ENCODE measurements at regions of chr6 and their contacts with region 1.

Region 1: DNA sequence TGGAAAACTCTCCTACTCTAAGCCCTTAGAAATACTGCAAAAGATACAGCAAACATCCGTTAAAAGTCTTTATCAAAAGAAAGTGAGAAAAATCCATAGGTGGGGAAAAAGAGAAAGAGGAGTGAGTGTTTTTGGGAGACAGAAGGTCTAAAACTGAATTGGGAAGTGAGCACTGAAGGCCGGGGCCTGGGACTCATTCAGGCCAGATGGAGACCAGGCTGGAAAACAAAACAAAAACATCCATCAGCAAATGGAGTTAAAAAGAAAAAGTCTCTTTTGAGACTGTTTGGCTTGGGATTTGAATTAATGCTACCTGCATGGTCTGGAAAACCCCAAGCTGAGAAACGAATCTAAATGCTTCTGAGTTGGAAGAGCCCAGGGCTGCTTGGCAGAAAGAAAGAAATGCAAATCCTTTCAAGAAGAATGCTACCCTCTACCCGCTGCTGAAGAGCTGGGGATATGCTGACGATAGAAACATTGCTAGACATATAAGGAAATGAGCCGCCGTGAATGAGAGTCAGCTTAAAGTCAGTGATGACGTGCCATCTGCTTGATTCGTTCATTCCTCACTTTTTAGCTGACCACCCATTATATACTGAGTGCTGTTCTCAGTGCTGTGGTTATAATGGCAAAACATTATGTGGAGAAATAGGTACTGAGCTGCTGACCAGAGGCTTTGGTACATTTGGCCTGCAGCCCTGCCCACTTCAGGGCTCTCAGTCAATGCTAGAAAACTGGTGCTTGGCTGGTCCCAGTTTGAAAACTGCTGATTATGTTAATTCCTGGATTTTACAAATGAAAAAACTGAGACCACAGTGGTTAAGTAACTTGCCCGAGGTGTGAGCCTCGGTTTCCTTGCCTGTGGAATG is 28.0 kb upstream of the TULP4 start:
- DNase-seq: peak in 2 of 10 donors; percentile 17 to 26
- H3K4me3 ChIP-seq: peak overlapping the region in 23 of 59 donors; percentile 1 to 37 (median 17)
- H3K27ac ChIP-seq: peak overlapping the region; percentile 47 to 94 (median 89)
- H3K27me3 ChIP-seq: no peaks in the 10 kb centered on the region
- CTCF ChIP-seq: no peak

Region 2: GRCh38 chr6:158086504-158087223 is 197.6 kb before region 1 on chr6:
- intact Hi-C with region 1: no loop called
- DNase-seq: peak in 2 of 10 donors; percentile 48 to 62
- H3K4me3 ChIP-seq: peak overlapping the region in 31 of 59 donors; percentile 0 to 46 (median 25)
- H3K27ac ChIP-seq: peak overlapping the region in 50 of 59 donors; percentile 16 to 83 (median 70)
- H3K27me3 ChIP-seq: no peaks in the 10 kb centered on the region
- CTCF ChIP-seq: no peak

Region 3: DNA sequence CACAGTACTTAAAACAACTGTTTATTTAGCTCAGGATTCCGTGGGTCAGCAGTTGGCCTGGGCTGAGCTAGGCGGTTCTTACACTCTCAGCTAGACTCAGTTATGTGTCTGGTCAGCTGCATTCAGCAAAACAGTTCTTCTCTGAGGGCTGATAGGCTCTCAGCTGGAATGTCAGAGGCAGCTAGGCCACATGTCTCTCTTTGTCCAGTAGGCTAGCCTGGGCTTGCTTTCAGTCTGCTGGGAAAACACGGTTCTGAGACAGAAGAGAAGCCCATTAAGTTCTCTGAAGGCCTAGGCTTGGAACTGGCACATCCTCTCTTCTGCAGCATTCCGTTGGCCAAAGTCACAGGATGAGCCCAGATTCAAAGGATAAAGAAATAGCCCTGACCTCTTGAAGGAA is 93.6 kb after region 1 on chr6:
- intact Hi-C with region 1: loop called in 1 of 2 experiments (anchors 10 kb)
- DNase-seq: peak in 2 of 10 donors; percentile 60
- H3K4me3 ChIP-seq: no peak overlapping the region
- H3K27ac ChIP-seq: peak overlapping the region in 56 of 59 donors; percentile 12 to 88 (median 74)
- H3K27me3 ChIP-seq: no peaks in the 10 kb centered on the region
- CTCF ChIP-seq: peak in 2 of 56 donors; percentile 8 to 27

Region 4: GRCh38 chr6:158408552-158409130 is 124.4 kb after region 1 on chr6:
- intact Hi-C with region 1: loop called (anchors 5 to 10 kb)
- DNase-seq: peak in 9 of 10 donors; percentile 47 to 74 (median 65)
- H3K4me3 ChIP-seq: peak overlapping the region in 5 of 59 donors; percentile 5 to 30 (median 21)
- H3K27ac ChIP-seq: peak overlapping the region; percentile 30 to 98 (median 90)
- H3K27me3 ChIP-seq: no peaks in the 10 kb centered on the region
- CTCF ChIP-seq: peak in 5 of 56 donors; percentile 9 to 22 (median 12)

Region 5: DNA sequence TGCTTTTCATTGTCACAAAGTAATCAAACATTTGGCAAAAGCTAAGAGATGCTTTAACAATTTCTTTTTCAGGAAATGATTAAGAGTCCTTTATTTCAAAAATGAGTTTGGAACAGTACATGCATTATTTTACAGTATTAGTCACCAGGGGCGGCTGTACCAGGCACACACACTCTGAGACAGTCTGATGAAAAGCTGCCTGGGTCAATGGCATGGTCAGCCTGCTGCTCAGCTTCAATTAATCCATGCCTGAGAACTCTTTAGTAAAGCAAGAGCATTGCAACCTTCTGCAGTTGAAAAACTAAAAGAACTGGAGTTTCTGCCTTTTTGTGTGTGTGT is 133.5 kb after region 1 on chr6:
- intact Hi-C with region 1: loop called in 1 of 2 experiments (anchors 10 kb)
- DNase-seq: peak in 4 of 10 donors; percentile 58 to 75 (median 69)
- H3K4me3 ChIP-seq: peak overlapping the region in 1 of 59 donors; percentile 13
- H3K27ac ChIP-seq: peak overlapping the region; percentile 29 to 98 (median 91)
- H3K27me3 ChIP-seq: no peaks in the 10 kb centered on the region
- CTCF ChIP-seq: peak in 1 of 56 donors; percentile 9

Measured in dorsolateral prefrontal cortex (tissue), 120 donors.